Activated naive CD4-positive, alpha-beta T cell treated with anti-CD3 and anti-CD28 coated beads, Interleukin-2, amount 10 ng/mL, durations not matched to agents 7 days and 5 days (primary cell): ENCODE measurements at regions of chr16 and their contacts with region 1.

Region 1: GRCh38 chr16:9138716-9139501 is 47.5 kb downstream of the HAPSTR1 start:
- DNase-seq: peak; percentile 77
- H3K4me3 Mint-ChIP-seq: no peak overlapping the region
- H3K27ac Mint-ChIP-seq: no peak overlapping the region
- H3K4me1 Mint-ChIP-seq: peaks cover 12% of the 10 kb centered on the region
- H3K27me3 Mint-ChIP-seq: peaks cover 23% of the 10 kb centered on the region

Region 2: DNA sequence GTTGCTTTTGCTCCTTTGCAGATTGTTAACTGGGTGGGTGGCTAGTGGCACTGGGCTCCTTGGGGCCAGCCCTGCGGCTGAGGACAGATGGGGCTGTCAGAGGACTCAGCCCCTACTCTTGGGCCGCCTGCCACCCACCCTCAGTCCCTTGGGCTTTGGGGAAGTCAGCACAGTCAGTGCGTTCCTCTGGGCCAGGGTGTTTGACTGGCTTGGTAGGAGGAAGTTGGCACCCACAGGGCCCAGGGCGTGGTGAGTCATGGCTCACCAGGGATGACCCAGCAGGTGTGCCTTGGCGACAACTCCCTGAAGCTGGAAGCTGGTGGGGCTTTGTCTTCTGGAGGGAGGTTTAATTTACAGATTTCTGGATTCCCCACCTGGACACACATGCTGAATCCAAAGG is 15.0 kb before region 1 on chr16:
- CTCF ChIA-PET with region 1: interaction called, 10 read pairs
- DNase-seq: no peak
- H3K4me3 Mint-ChIP-seq: no peak overlapping the region
- H3K27ac Mint-ChIP-seq: no peak overlapping the region
- H3K4me1 Mint-ChIP-seq: peaks cover 44% of the 10 kb centered on the region
- H3K27me3 Mint-ChIP-seq: no peaks in the 10 kb centered on the region